OCI-LY7 (cell line): ENCODE measurements at regions of chr19 and their contacts with region 1.

Region 1: DNA sequence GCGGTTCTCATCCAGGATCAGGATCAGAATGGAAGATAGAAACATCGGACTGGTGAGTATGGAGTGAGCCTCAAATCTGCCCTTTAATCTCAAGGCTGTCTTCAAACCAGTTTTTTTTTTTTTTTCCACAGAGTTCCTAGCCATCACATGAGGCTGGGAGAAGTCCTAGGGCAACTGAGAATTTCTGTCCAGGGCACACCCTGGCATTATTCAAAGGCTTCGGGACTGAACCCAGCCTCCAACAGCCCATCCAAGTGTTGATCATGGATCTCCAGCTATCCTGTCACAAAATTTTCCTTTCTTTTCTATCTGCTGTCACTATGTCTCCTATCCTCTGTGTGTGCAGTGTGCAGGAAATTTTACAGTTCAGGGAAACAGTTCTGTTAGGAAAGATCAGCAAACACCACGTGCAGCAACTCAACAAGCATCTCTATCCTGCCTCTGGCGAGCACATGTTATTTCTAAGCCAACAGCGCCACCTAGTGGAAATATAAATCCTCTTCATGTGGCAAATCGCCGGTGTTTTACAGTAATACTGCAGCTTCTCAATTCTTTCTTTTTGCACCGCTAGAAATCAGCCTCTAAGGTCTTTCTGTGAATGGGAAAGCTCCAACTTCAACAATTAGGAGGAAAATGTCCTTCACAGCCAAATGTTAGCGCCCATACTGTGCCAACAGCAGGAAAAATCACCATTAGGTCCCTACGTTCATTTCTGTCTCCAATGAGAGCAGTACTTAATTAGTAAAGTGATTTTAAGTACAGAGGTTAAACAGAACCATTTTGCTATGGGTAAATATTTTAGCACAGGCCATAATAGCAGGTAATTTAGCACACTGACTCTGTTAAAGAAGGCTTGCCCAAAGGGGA is 21.4 kb upstream of the ZNF181 start:
- DNase-seq: peak; percentile 82
- H3K4me3 ChIP-seq: no peak overlapping the region
- H3K27ac ChIP-seq: no peak overlapping the region
- H3K4me1 ChIP-seq: no peaks in the 10 kb centered on the region
- CTCF ChIP-seq: peak; percentile 87

Region 2: DNA sequence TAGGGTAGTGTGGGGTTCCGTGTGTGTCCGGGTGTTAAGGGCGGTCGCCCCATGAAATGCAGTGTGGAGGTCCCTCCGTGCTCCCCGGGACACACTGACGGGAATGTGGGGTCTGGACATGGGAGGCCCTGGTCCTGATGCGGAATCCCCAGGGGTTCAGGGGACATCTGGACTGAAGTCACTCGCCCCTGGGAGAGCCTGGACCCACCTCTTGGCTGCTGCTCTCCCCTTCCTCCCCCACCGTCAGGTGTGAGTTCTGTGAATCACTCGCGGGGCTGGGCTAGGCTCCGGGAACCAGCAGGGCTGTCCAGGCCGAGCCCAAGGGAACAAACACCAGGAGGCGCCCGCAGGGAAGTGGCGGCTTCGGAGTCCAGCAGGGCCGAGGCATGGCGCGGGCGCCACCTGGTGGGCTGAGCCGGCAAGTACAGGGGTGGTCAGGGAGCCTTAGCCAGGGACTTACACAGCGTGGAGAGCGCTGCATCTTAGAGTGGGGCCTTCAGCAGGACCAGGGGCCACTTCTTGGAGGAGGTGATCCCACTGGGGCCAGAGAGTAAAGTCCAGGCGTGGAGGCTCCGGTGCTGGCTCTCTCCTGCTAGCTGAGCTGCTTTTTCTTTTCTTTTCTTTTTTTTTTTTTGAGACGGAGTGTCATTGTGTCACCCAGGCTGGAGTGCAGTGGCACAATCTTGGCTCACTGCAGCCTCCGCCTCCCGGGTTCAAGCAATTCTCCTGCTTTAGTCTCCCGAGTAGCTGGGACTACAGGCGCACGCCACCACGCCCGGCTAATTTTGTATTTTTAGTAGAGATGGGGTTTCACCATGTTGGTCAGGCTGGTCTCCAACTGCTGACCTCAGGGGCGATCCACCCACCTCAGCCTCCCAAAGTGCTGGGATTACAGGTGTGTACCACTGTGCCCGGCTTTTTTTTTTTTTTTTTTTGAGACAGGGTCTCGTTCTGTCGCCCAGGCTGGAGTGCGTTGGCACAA is 211.0 kb before region 1 on chr19:
- CTCF ChIA-PET with region 1: no interaction called
- POLR2A ChIA-PET with region 1: no interaction called
- intact Hi-C with region 1: loop called (anchors 1 kb)
- DNase-seq: peak; percentile 70
- H3K4me3 ChIP-seq: no peak overlapping the region
- H3K27ac ChIP-seq: no peak overlapping the region
- H3K4me1 ChIP-seq: no peaks in the 10 kb centered on the region
- CTCF ChIP-seq: peak; percentile 93

Region 3: GRCh38 chr19:34534206-34534605 is 178.4 kb before region 1 on chr19:
- CTCF ChIA-PET with region 1: no interaction called
- POLR2A ChIA-PET with region 1: no interaction called
- intact Hi-C with region 1: no loop called
- DNase-seq: no peak
- H3K4me3 ChIP-seq: no peak overlapping the region
- H3K27ac ChIP-seq: no peak overlapping the region
- H3K4me1 ChIP-seq: no peaks in the 10 kb centered on the region
- CTCF ChIP-seq: no peak

Region 4: DNA sequence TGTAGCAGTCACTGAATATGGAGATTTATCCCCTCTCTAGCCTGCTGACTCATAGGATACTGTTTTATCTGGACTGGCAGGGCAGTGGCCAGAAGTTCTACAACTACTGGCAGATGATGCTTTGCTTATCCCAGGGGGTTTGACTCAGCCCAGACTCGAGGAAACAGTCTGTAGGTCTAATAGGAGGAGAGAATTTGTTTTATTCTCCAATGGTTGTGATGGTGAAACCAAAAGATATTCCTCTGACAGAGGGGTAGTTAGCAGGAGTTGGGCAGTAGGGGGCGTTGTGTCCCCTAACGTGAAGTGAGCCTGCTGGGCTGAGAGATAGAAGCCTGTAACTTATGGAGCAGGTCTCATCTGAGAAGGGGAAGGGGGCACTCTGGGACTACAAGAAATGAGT is 156.1 kb before region 1 on chr19:
- CTCF ChIA-PET with region 1: no interaction called
- POLR2A ChIA-PET with region 1: no interaction called
- intact Hi-C with region 1: loop called (anchors 5 kb)
- DNase-seq: peak; percentile 24
- H3K4me3 ChIP-seq: no peak overlapping the region
- H3K27ac ChIP-seq: no peak overlapping the region
- H3K4me1 ChIP-seq: no peaks in the 10 kb centered on the region
- CTCF ChIP-seq: peak; percentile 75

Region 5: GRCh38 chr19:34639491-34640085 is 73.0 kb before region 1 on chr19:
- CTCF ChIA-PET with region 1: no interaction called
- POLR2A ChIA-PET with region 1: no interaction called
- intact Hi-C with region 1: loop called (anchors 1 kb)
- DNase-seq: peak; percentile 83
- H3K4me3 ChIP-seq: no peak overlapping the region
- H3K27ac ChIP-seq: no peak overlapping the region
- H3K4me1 ChIP-seq: no peaks in the 10 kb centered on the region
- CTCF ChIP-seq: peak; percentile 96

Region 6: GRCh38 chr19:34733826-34734600 is 21.4 kb after region 1 on chr19 and contains the start of gene ZNF181:
- CTCF ChIA-PET with region 1: no interaction called
- POLR2A ChIA-PET with region 1: no interaction called
- intact Hi-C with region 1: no loop called
- DNase-seq: peak; percentile 87
- H3K4me3 ChIP-seq: peak within 1 kb of the TSS; percentile 77
- H3K27ac ChIP-seq: peak within 1 kb of the TSS; percentile 62
- H3K4me1 ChIP-seq: peaks cover 17% of the 10 kb centered on the region
- CTCF ChIP-seq: no peak; the same call in 1 of the 2 replicates
- total RNA-seq, gene ZNF181: 13.0 and 18.8 TPM in 2 replicates